Left cardiac atrium (tissue), 4 donors: ENCODE measurements at regions of chr12 and their contacts with region 1.

Region 1: GRCh38 chr12:69157023-69157655 is 82.2 kb upstream of the CPSF6 start:
- DNase-seq: peak; percentile 82
- ATAC-seq: peak; percentile 83 to 92

Region 2: GRCh38 chr12:69239352-69239921 is 82.3 kb after region 1 on chr12 and contains the start of gene CPSF6:
- intact Hi-C with region 1: loop called in 1 of 2 experiments (anchors 5 kb)
- DNase-seq: peak; percentile 96
- ATAC-seq: peak; percentile 99 to 100
- total RNA-seq, gene CPSF6: 34.5 to 42.4 TPM

Region 3: GRCh38 chr12:69254046-69254445 is 96.9 kb after region 1 on chr12:
- intact Hi-C with region 1: loop called (anchors 1 to 2 kb)
- DNase-seq: no peak
- ATAC-seq: peak in 1 of 2 donors; percentile 30

Region 4: GRCh38 chr12:69298947-69299346 is 141.8 kb after region 1 on chr12:
- intact Hi-C with region 1: no loop called
- DNase-seq: no peak
- ATAC-seq: no peak

Region 5: DNA sequence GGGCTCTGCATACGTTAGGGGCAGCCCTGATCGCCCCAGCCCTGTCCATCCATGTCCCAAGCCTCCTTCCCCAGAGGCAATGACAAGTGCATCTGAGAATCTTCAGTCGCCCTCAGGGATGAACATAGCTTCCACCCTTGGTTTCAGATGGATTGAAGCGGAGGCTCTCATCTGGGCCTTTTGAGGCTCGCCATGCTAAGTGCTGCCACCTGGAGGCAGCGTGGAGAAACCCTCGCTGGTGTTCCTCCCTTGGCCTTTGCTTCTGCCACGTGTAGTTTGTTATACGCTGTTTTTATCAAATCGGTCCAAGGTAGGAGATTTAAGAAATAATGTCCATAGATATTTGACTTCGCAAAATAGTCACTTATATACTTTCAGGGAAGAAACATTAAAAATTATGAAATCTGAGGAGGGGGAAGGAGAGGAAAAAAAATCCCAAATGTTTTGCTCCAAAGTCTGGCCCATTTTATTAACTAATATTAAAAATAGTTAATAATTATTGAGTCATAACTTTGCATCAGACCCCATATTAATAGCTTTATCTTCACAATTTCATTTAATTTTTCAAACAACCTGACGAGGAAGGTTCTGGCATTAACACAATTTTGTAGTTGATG is 482.4 kb after region 1 on chr12:
- intact Hi-C with region 1: loop called in 1 of 2 experiments (anchors 5 kb)
- DNase-seq: peak; percentile 66
- ATAC-seq: peak; percentile 75 to 83

Region 6: GRCh38 chr12:69751476-69751875 is 594.3 kb after region 1 on chr12:
- intact Hi-C with region 1: no loop called
- DNase-seq: no peak
- ATAC-seq: no peak